Aorta (tissue), 5 donors: ENCODE measurements at regions of chr9 and their contacts with region 1.

Region 1: DNA sequence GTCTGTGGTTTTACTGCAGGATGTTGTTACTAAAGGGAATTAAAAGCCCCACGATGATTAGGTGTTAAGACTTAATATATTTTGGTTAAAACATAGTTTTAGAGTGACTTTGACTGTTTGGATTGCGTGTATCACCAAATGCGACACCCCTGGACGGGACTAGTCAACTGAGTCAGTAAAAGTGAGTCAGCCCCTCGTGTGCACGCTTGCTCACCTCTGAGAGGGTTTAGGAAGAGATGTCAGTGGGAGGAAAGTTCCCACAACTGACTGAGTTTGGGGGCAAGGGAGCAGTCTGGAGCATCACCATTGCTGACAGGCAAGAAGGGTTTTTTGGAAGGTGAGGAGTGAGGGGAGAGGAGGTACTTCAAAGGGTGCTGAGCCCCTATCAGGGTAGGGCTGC is 14.4 kb upstream of the DMRT3 start:
- DNase-seq: no peak
- ATAC-seq: no peak
- H3K4me3 ChIP-seq: no peak overlapping the region
- H3K27ac ChIP-seq: no peak overlapping the region
- H3K4me1 ChIP-seq: no peaks in the 10 kb centered on the region
- H3K27me3 ChIP-seq: no peaks in the 10 kb centered on the region

Region 2: GRCh38 chr9:1018121-1018701 is 56.2 kb after region 1 on chr9:
- intact Hi-C with region 1: no loop called
- DNase-seq: no peak
- ATAC-seq: no peak
- H3K4me3 ChIP-seq: no peak overlapping the region
- H3K27ac ChIP-seq: no peak overlapping the region
- H3K4me1 ChIP-seq: no peaks in the 10 kb centered on the region
- H3K27me3 ChIP-seq: peaks cover 0 to 1% of the 10 kb centered on the region in 2 donors

Region 3: DNA sequence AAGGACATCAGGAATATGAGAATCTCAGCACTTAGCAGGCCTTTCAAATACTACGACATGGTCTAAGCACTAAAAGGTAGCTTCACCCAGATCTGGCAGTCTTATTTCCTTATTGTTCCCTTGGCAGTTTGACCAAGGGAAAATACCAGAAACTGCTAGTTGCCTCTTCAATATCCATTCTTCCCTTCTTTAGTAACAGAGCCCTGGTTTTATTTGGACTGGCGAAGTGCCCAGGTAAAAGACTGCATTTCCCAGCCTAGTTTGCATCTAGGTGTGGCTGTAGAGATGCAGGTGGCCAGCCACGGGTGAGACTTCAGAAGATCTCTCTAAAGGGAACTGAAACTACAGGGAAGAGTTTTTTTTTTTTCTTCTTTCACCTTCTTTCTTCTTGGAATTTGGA is 109.7 kb after region 1 on chr9:
- intact Hi-C with region 1: no loop called
- DNase-seq: no peak
- ATAC-seq: no peak
- H3K4me3 ChIP-seq: no peak overlapping the region
- H3K27ac ChIP-seq: no peak overlapping the region
- H3K4me1 ChIP-seq: no peaks in the 10 kb centered on the region
- H3K27me3 ChIP-seq: no peaks in the 10 kb centered on the region

Region 4: DNA sequence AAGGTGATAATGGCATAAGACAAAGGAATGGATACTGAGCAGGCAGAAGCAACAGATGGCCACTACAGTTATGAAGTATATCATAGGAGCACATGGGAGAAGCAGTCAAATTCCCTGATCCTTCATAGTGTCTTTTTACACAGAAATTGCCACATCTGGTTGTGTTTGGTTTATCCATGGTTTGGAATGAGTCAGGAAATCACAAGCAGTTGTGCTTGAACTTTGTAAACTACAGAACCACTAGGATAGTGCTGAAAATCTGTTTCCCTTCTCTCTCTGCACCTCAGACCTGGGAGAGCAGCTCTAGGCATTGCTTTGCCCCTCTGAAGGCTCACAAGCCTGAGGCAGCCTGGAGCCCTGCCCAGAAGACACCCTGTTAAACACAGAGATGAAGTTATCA is 222.1 kb after region 1 on chr9:
- intact Hi-C with region 1: loop called in 1 of 2 experiments (anchors 5 kb)
- DNase-seq: no peak
- ATAC-seq: no peak
- H3K4me3 ChIP-seq: no peak overlapping the region
- H3K27ac ChIP-seq: no peak overlapping the region
- H3K4me1 ChIP-seq: no peaks in the 10 kb centered on the region
- H3K27me3 ChIP-seq: no peaks in the 10 kb centered on the region